B cell (primary cell): ENCODE measurements at regions of chr6 and their contacts with region 1.

Region 1: GRCh38 chr6:32796848-32797776 is 19.7 kb downstream of the HLA-DOB start:
- DNase-seq: peak; percentile 92
- ATAC-seq: peak; percentile 83
- H3K4me3 ChIP-seq: peak overlapping the region in 4 of 5 experiments; percentile 26 to 53 (median 42)
- H3K4me3 Mint-ChIP-seq: peak overlapping the region; percentile 90
- H3K27ac ChIP-seq: peak overlapping the region; percentile 60 to 64
- H3K27ac Mint-ChIP-seq: peak overlapping the region; percentile 93
- H3K4me1 ChIP-seq: peaks cover 26 to 32% of the 10 kb centered on the region in 2 donors
- H3K4me1 Mint-ChIP-seq: peaks cover 40% of the 10 kb centered on the region
- H3K27me3 ChIP-seq: no peaks in the 10 kb centered on the region
- H3K27me3 Mint-ChIP-seq: no peaks in the 10 kb centered on the region
- CTCF ChIP-seq: peak; percentile 91

Region 2: DNA sequence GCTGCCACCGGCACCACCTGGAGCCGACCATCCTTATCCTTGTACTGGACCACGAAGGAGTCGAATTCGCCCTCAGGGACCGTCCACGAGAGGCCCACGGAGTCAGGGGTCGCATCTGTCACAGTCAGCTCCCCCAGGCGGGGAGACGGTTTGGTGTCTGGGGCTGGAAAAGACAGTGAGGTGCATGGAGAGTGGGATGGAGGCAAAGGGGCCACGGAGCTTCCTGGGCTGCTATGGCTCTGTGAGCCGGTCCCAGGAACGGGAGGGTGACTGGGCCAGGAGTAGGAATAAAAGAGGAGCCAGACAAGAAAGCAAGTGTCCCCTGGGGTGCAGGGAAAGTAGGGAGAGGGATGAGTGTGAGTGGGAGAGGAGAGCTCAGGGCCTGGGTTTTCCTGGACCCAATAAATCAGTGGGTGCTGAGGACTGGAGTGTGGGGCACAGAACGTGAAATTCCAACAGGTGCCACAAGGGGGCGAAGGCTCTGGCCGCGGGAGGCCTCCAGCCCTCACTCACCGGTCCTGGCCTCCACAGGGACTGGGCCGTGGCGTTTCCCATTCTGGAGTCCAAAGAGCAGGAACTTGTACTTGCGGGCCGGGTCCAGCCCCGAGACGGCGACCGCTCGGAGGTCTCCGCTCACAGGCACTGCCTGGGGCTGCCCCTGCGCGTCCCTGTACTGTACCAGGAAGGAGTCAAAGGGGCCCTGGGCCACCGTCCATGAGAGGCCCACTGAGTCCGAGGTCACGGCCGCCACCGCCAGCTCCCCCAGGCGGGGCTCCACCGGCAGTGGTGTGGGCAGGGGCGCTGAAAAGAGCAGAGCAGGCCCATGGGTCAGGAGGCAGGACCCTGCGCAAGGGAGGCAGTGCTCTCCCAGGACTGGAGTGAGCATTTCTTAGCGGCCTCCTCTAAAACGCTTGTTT is 749.0 kb before region 1 on chr6:
- CTCF ChIA-PET with region 1: interaction called, 8 read pairs
- POLR2A ChIA-PET with region 1: no interaction called
- intact Hi-C with region 1: loop called (anchors 10 kb)
- DNase-seq: peak; percentile 80
- ATAC-seq: peak; percentile 84
- H3K4me3 ChIP-seq: no peak overlapping the region
- H3K4me3 Mint-ChIP-seq: no peak overlapping the region
- H3K27ac ChIP-seq: no peak overlapping the region
- H3K27ac Mint-ChIP-seq: no peak overlapping the region
- H3K4me1 ChIP-seq: peaks cover 0 to 4% of the 10 kb centered on the region in 2 donors
- H3K4me1 Mint-ChIP-seq: peaks cover 5% of the 10 kb centered on the region
- H3K27me3 ChIP-seq: no peaks in the 10 kb centered on the region
- H3K27me3 Mint-ChIP-seq: peaks cover 16% of the 10 kb centered on the region
- CTCF ChIP-seq: peak; percentile 93

Region 3: DNA sequence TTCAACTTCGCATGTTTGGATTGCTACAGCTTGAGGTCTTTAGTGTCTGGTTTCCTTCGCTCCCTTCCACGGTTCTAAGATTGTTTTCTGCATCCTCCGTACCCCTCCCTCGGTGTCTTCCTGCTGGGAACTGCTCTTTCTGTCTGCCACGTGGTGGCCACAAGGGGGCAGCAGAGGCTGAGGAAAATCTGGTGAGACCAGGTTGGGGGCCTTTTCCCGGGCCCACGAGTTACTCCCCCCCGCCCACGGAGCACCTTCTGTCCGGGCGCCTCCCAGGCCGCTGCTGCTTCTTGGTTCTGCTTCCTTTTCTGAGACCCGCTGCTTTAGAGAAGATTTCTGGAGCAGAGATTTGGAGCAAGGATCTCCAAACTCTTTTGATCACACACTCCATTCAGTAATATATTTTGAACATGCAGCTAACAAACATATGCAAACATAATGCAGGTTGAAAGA is 552.1 kb before region 1 on chr6:
- CTCF ChIA-PET with region 1: interaction called, 6 read pairs
- POLR2A ChIA-PET with region 1: no interaction called
- intact Hi-C with region 1: loop called (anchors 1 kb)
- DNase-seq: peak; percentile 87
- ATAC-seq: peak; percentile 93
- H3K4me3 ChIP-seq: peak overlapping the region in 3 of 5 experiments; percentile 8 to 40 (median 24)
- H3K4me3 Mint-ChIP-seq: peak overlapping the region; percentile 76
- H3K27ac ChIP-seq: no peak overlapping the region
- H3K27ac Mint-ChIP-seq: peak overlapping the region; percentile 33
- H3K4me1 ChIP-seq: peaks cover 8 to 16% of the 10 kb centered on the region in 2 donors
- H3K4me1 Mint-ChIP-seq: peaks cover 15% of the 10 kb centered on the region
- H3K27me3 ChIP-seq: no peaks in the 10 kb centered on the region
- H3K27me3 Mint-ChIP-seq: no peaks in the 10 kb centered on the region
- CTCF ChIP-seq: peak; percentile 90

Region 4: DNA sequence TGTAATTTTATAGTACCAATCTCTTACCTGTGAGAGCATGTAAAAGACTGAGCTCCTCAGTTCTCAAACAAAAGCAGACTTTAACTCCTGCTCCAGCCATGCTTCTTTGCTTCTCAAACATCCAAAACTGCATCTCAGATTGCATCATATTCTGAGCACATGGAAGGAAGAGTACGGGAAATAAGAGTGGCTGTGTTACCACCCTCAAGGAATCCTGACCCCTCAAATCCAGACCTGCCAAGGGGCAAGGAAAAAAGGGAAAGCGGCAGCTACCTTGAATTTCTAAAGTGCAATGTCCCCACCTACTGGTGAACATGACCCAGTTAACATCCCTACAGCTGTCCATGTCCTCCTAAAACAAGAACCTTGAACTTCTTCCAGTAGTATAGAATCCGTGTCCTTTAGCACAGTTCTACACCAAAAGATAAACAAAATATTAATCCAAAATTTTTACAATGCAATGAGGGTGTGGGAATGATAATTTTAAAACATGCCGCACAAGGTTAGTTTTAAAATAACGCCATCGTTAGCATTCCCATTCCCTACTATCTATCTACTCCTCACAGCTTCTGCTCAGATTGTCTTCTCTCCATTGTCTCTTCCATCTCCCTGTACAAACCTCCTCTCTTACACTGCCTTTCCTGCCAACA is 96.6 kb before region 1 on chr6:
- CTCF ChIA-PET with region 1: interaction called, 10 read pairs
- POLR2A ChIA-PET with region 1: no interaction called
- intact Hi-C with region 1: no loop called
- DNase-seq: peak; percentile 79
- ATAC-seq: peak; percentile 71
- H3K4me3 ChIP-seq: peak overlapping the region in 3 of 5 experiments; percentile 13 to 38 (median 27)
- H3K4me3 Mint-ChIP-seq: peak overlapping the region; percentile 84
- H3K27ac ChIP-seq: no peak overlapping the region
- H3K27ac Mint-ChIP-seq: peak overlapping the region; percentile 85
- H3K4me1 ChIP-seq: peaks cover 0 to 4% of the 10 kb centered on the region in 2 donors
- H3K4me1 Mint-ChIP-seq: peaks cover 18% of the 10 kb centered on the region
- H3K27me3 ChIP-seq: peaks cover 0 to 6% (median 4%) of the 10 kb centered on the region in 4 experiments
- H3K27me3 Mint-ChIP-seq: peaks cover 3% of the 10 kb centered on the region
- CTCF ChIP-seq: peak; percentile 64

Region 5: GRCh38 chr6:32838114-32838958 is 41.2 kb after region 1 on chr6 and contains the start of gene TAP2:
- CTCF ChIA-PET with region 1: interaction called, 23 read pairs
- POLR2A ChIA-PET with region 1: interaction called, 11 read pairs
- intact Hi-C with region 1: loop called (anchors 5 kb)
- DNase-seq: peak; percentile 97
- ATAC-seq: peak; percentile 84
- H3K4me3 ChIP-seq: peak within 1 kb of the TSS; percentile 71 to 80 (median 76)
- H3K4me3 Mint-ChIP-seq: peak within 1 kb of the TSS; percentile 97
- H3K27ac ChIP-seq: peak within 1 kb of the TSS; percentile 83 to 97
- H3K27ac Mint-ChIP-seq: peak within 1 kb of the TSS; percentile 99
- H3K4me1 ChIP-seq: peaks cover 59 to 73% of the 10 kb centered on the region in 2 donors
- H3K4me1 Mint-ChIP-seq: peaks cover 92% of the 10 kb centered on the region
- H3K27me3 ChIP-seq: no peaks in the 10 kb centered on the region
- H3K27me3 Mint-ChIP-seq: no peaks in the 10 kb centered on the region
- CTCF ChIP-seq: peak; percentile 90
- total RNA-seq, gene TAP2: 126 and 135 TPM in 2 replicates